ENCODE measurements at regions of chr22 and their contacts with region 1.

Region 1: DNA sequence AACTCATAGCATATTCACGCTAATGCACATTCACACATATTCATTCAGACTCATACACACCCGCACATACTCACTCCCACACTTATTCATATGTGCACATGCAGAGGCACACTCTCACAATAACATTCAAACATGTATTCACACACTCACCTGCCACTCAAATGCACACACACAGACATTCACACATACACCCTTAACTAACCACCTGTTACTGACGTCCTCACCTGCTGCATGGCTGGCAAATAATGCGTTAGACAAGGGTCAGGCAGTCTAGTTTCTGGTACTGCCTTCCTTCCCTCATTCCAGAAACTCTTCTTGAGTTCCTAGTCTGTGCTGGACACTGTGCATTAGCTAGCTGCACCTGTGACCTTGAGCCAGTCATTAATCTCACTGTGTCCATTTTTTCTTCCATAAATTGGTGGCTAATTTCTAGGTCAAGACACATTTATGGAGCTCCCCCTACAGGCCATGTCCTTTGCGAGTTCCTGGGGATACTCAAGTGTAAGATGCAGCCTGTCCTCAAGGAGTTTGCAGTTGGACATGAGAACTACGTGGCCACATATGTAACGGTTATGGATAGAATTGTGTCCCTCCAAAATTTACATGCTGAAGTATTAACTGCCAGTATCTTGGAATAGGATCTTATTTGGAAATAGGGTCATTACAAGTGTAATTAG is 34.5 kb upstream of the SEZ6L start:
- DNase-seq: no peak
- CTCF ChIP-seq: peak; percentile 48

Region 2: GRCh38 chr22:26236991-26237390 is 102.2 kb after region 1 on chr22:
- in situ Hi-C with region 1: loop called (anchors 25 kb)
- DNase-seq: no peak
- CTCF ChIP-seq: no peak

Region 3: GRCh38 chr22:26364066-26365015 is 229.5 kb after region 1 on chr22:
- in situ Hi-C with region 1: no loop called
- DNase-seq: peak; percentile 60
- CTCF ChIP-seq: peak; percentile 86

Measured in GM13977 (cell line).